SK-N-SH (cell line): ENCODE measurements at regions of chrX and their contacts with region 1.

Region 1: GRCh38 chrX:155148724-155149537 is 67.3 kb upstream of the VBP1 start:
- DNase-seq: peak; percentile 14
- H3K4me3 ChIP-seq: no peak overlapping the region
- H3K27ac ChIP-seq: no peak overlapping the region
- H3K4me1 ChIP-seq: no peaks in the 10 kb centered on the region; a peak in 1 of 4 replicates
- H3K27me3 ChIP-seq: no peaks in the 10 kb centered on the region
- CTCF ChIP-seq: peak; percentile 65
- EP300 ChIP-seq: no peak
- RAD21 ChIP-seq: peak; percentile 35

Region 2: GRCh38 chrX:155056877-155057792 is 91.8 kb before region 1 on chrX:
- CTCF ChIA-PET with region 1: no interaction called
- POLR2A ChIA-PET with region 1: no interaction called
- DNase-seq: peak; percentile 69
- H3K4me3 ChIP-seq: no peak overlapping the region
- H3K27ac ChIP-seq: no peak overlapping the region
- H3K4me1 ChIP-seq: peaks cover 0 to 7% of the 10 kb centered on the region in 2 experiments; a peak in 1 of 4 replicates
- H3K27me3 ChIP-seq: no peaks in the 10 kb centered on the region
- CTCF ChIP-seq: peak; percentile 83
- EP300 ChIP-seq: no peak
- RAD21 ChIP-seq: peak; percentile 72

Region 3: DNA sequence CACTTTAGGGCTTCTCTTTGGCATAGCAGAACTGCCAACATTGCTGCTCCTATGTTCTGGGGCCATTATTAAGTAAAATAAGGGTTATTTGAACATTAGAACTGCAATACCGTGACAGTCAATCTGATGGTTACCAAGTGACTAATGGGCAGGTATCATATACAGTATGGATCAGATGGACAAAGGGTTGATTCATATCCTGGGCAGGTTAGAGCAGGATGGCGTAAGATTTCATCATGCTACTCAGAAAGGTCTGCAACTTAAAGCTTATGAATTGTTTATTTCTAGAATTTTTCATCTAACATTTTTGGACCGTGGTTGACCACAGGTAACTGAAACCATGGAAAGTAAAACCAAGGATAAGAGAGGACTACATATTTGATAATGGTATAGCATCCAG is 36.8 kb before region 1 on chrX:
- CTCF ChIA-PET with region 1: no interaction called
- POLR2A ChIA-PET with region 1: no interaction called
- DNase-seq: no peak
- H3K4me3 ChIP-seq: no peak overlapping the region
- H3K27ac ChIP-seq: no peak overlapping the region
- H3K4me1 ChIP-seq: no peaks in the 10 kb centered on the region
- H3K27me3 ChIP-seq: no peaks in the 10 kb centered on the region
- CTCF ChIP-seq: no peak
- EP300 ChIP-seq: no peak
- RAD21 ChIP-seq: no peak

Region 4: DNA sequence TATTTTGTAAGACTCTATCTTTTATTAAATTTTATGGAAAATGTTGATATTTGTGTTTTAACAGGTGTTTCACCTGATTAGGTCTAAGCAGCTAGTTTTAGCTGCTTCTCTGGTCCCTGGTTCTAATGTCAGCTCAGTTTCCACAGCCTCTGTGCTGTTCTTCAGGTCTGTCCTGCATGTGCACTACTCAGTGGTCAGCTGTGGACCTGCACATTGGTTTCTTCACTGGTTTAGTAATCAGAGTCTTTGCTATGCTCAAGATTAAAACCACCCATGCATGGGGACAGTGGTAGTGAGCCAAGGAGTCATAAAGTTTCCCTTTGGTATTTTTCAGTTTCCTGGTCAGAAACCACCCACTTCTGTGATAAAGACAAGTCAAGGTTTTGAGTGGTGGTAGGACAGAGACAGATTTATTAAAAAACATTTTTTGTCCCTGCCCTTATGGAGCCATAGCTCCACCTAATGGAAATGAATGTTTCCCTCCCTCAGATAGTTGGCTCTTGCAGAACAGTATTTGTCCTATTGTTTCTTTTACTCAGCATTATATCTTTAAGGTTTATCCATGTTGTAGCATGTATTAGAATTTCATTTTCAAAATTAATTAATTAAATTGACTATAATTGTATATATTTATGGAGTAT is 30.5 kb after region 1 on chrX:
- CTCF ChIA-PET with region 1: interaction called, 16 read pairs
- POLR2A ChIA-PET with region 1: no interaction called
- DNase-seq: no peak
- H3K4me3 ChIP-seq: no peak overlapping the region
- H3K27ac ChIP-seq: no peak overlapping the region
- H3K4me1 ChIP-seq: no peaks in the 10 kb centered on the region
- H3K27me3 ChIP-seq: no peaks in the 10 kb centered on the region
- CTCF ChIP-seq: no peak
- EP300 ChIP-seq: no peak
- RAD21 ChIP-seq: no peak

Region 5: DNA sequence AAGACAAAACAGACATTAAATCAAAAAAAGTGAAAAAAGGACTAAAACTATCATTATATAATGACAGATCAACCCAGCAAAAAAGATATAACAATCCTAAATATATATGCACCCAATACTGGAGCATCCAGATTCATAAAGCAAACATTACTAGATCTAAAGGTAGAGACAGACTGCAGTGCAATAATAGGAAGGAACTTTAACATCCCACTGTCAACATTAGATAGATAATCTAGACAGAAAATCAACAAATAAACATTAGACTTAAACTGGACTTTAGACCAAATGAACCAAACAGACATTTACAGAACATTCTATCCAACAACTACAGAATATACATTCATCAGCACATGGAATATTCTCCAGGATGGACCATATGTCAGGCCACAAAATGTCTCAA is 144.8 kb after region 1 on chrX:
- CTCF ChIA-PET with region 1: no interaction called
- POLR2A ChIA-PET with region 1: no interaction called
- DNase-seq: no peak
- H3K4me3 ChIP-seq: no peak overlapping the region
- H3K27ac ChIP-seq: no peak overlapping the region
- H3K4me1 ChIP-seq: no peaks in the 10 kb centered on the region
- H3K27me3 ChIP-seq: no peaks in the 10 kb centered on the region
- CTCF ChIP-seq: no peak
- EP300 ChIP-seq: no peak
- RAD21 ChIP-seq: no peak